ENCODE measurements at regions of chr15 and their contacts with region 1.

Region 1: DNA sequence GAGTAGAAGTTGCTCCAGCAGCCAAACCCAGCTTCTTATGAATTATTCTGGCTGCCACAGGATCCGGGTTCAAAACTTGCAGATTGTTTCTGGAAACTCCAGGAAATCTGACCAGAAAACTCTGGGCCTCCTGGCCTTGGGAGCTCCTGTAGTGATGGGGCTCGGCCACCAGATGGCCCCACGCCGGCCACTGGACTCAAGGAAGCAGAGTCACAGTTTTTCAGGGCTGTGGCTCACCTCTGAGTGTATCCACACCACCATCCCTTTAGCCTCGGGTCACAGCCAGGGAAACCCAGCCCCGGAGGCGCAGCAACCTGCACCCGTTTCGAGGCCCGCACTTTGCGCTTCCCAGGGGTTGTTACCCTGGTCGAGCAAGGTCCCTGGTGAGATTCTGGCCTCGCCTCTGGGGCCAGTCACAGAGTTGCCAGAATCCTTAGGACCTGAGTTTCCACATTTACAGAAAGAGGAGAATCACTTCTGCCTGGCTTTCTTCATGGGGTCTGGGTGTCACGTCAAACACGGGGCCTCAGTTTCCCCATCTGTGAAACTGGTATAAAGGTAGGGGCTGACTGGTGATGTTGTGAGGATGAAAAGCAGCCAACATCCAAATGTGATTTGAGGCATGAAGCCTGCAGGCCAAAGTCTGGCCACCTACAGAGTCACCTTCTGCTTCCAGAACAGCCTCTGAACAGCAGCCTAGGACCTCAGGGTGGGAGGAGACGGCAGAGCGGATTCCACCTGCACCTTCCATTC is 53.5 kb upstream of the LCTL start:
- DNase-seq: peak; percentile 79 to 93 (median 93)
- ATAC-seq: peak; percentile 53
- H3K4me3 ChIP-seq: no peak overlapping the region
- H3K27ac ChIP-seq: peak overlapping the region; percentile 69
- H3K4me1 ChIP-seq: peaks cover 8% of the 10 kb centered on the region
- H3K27me3 ChIP-seq: no peaks in the 10 kb centered on the region

Region 2: DNA sequence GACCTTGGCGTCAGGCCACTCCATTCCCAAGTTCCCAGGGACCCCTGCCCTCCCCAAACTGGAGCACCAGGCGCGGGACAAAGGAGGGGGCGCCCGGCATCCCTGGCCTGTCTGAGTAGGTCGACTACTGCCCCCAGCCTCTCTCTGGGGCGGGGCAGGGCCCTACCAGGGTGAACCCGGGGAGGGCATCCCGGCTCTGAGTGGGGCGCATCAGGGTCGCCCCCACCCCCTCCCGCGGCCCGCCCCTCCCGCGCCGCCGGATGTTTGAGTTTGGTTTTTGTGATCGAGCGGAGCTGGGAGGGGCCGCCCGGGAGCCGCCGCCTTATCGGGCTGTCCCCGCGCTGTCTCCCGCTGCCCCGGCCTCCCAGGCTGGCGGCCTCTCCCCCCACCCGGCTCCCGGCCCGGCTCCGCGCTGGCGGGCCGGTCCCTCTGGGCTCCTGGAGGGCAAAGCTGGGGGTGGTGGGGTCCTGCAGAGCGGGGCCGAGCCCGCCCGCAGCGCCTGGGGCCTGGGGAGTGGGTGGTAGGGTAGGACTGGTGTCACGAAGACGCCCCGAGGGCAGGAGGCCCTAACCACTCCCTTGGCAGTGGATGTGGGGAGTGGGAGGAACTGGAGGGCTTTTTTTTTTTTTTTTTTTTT is 35.5 kb after region 1 on chr15:
- intact Hi-C with region 1: loop called in 1 of 4 experiments (anchors 5 kb)
- DNase-seq: peak; percentile 71 to 89 (median 89)
- ATAC-seq: peak; percentile 73 to 80
- H3K4me3 ChIP-seq: peak overlapping the region; percentile 35
- H3K27ac ChIP-seq: peak overlapping the region; percentile 84
- H3K4me1 ChIP-seq: peaks cover 21% of the 10 kb centered on the region
- H3K27me3 ChIP-seq: no peaks in the 10 kb centered on the region

Region 3: GRCh38 chr15:66700802-66701421 is 81.6 kb after region 1 on chr15:
- intact Hi-C with region 1: loop called (anchors 2 to 5 kb)
- DNase-seq: peak; percentile 97 to 99 (median 99)
- ATAC-seq: peak; percentile 76 to 78
- H3K4me3 ChIP-seq: peak overlapping the region; percentile 95
- H3K27ac ChIP-seq: peak overlapping the region; percentile 99
- H3K4me1 ChIP-seq: peaks cover 4% of the 10 kb centered on the region
- H3K27me3 ChIP-seq: no peaks in the 10 kb centered on the region

Region 4: DNA sequence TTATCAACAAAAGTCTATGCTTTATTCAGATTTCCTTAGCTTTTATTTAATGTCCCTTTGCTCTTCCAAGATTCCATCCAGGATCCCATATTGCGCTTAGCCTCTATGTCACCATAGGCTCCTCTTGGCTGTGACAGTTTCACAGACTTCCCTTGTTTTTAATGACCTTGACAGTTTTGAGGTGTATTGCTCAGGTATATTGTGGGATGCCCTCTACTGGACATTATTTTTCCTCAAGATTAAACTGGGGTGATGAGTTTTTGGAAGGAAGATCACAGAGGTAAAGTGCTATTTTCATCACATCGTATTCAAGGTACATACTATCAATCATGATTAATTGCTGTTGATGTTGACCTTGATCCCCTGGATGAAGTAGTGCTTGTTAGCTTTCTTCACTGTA is 346.9 kb after region 1 on chr15:
- intact Hi-C with region 1: no loop called
- DNase-seq: no peak
- ATAC-seq: no peak
- H3K4me3 ChIP-seq: no peak overlapping the region
- H3K27ac ChIP-seq: no peak overlapping the region
- H3K4me1 ChIP-seq: no peaks in the 10 kb centered on the region
- H3K27me3 ChIP-seq: no peaks in the 10 kb centered on the region